ENCODE measurements at regions of chr12 and their contacts with region 1.

Region 1: GRCh38 chr12:13374793-13375192 is 178.3 kb downstream of the EMP1 start:
- DNase-seq: no peak
- H3K4me3 ChIP-seq: no peak overlapping the region
- H3K27ac ChIP-seq: no peak overlapping the region
- H3K4me1 ChIP-seq: no peaks in the 10 kb centered on the region
- H3K27me3 ChIP-seq: no peaks in the 10 kb centered on the region
- CTCF ChIP-seq: no peak
- POLR2A ChIP-seq: no peak

Region 2: GRCh38 chr12:13311551-13311950 is 63.2 kb before region 1 on chr12:
- intact Hi-C with region 1: loop called (anchors 2 kb)
- DNase-seq: no peak
- H3K4me3 ChIP-seq: no peak overlapping the region
- H3K27ac ChIP-seq: no peak overlapping the region
- H3K4me1 ChIP-seq: no peaks in the 10 kb centered on the region
- H3K27me3 ChIP-seq: no peaks in the 10 kb centered on the region
- CTCF ChIP-seq: no peak
- POLR2A ChIP-seq: no peak

Region 3: GRCh38 chr12:13428538-13429265 is 53.9 kb after region 1 on chr12:
- intact Hi-C with region 1: no loop called
- DNase-seq: no peak
- H3K4me3 ChIP-seq: no peak overlapping the region
- H3K27ac ChIP-seq: no peak overlapping the region
- H3K4me1 ChIP-seq: no peaks in the 10 kb centered on the region
- H3K27me3 ChIP-seq: no peaks in the 10 kb centered on the region
- CTCF ChIP-seq: no peak
- POLR2A ChIP-seq: no peak